Posterior cingulate gyrus (tissue), 11 donors: ENCODE measurements at regions of chr3 and their contacts with region 1.

Region 1: DNA sequence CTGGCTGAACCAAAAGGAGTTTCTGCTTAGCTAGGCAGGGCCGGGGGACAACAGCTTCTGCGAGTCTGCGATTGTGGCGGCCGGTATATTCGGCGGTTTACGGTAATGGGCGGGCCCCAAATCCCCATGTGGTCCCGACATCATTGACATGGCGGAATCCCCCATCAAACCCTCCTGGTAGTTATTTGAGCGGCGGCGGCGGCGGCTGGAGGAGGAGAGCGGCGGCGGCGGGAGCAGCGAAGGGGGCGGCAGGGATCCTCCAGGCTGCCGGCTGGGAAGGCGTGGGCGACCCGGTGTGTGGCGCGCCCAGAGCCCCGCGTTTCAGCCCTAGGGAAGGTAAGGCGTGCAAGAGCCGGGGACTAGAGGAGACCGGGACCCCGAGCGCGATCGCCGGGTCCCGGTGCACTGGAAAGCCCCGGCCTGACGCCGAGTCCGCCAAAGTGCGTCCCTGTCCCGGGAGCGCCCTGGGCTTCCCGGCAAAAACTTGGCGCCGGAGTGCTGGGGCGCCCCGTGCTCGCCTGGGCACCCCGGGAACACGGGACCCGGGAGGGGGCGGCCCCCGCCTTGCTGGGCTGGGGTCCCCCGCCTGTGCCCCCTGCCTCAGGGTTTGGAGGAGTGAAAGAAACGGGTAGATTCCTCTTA is at the start of gene FNDC3B:
- DNase-seq: peak; percentile 91 to 99 (median 94)

Region 2: DNA sequence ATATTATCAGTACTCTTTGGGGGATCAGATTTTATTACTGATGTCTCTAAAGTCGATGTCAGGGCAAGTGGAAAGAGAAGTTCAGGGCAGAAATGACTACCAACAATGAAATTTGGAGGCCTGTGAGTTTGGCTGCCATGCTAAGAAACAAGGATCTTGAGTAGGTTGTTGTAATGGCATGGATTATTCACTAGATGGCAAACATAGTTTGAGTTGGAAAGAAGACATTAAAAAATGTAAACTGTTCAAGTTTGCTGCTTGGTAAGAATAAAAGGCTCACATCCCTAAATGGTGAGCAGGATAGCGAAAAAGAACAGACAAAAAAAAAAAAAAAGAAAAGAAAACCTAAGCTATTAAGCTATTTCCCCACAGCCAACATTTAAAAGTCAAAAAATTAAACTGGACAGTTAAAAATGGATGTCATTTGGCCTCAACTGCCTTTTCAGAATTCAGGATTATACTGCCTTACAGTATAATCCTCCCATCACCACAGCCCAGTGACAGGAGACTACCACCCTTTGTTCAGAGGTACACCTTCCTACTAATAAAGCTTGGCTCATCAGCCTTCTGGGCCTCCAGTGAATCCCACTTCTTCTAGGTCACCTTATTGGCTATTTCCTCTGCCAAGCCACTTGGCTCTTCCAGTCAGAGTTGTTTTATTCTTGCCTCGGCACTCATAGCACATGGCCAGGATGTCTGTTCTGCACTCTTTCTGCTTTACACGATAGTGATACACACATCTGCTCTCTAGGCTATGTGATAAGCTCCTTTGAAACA is 393.0 kb before region 1 on chr3:
- intact Hi-C with region 1: loop called (anchors 10 kb)
- DNase-seq: no peak

Region 3: GRCh38 chr3:171846597-171846996 is 193.0 kb before region 1 on chr3:
- intact Hi-C with region 1: loop called (anchors 10 kb)
- DNase-seq: no peak

Region 4: GRCh38 chr3:172129870-172130683 is 90.5 kb after region 1 on chr3:
- intact Hi-C with region 1: loop called (anchors 10 kb)
- DNase-seq: peak in 2 of 10 donors; percentile 17 to 74

Region 5: GRCh38 chr3:172201136-172201869 is 161.7 kb after region 1 on chr3:
- intact Hi-C with region 1: loop called (anchors 10 kb)
- DNase-seq: peak in 2 of 10 donors; percentile 31 to 79

Region 6: DNA sequence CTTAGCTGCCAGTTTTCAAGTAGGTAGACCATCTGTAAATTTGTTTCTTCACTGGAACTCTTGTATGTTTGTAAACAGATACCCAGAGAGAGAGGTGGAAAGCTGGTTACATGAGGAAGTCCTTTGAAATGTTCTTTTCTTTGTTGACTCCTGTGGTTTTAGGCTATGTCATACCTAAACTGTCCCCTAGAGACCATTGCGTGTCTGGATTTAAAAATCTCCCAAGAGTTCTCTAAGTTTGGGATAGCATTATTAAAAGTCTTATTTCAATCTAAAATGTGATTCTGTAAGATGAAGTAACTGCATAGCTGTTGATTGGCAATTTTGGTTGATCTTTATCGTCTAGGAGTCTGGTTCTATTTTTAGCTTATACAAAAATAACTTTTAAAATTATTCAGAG is 281.5 kb after region 1 on chr3:
- intact Hi-C with region 1: loop called (anchors 10 kb)
- DNase-seq: no peak